ENCODE measurements at regions of chr1 and their contacts with region 1.

Region 1: DNA sequence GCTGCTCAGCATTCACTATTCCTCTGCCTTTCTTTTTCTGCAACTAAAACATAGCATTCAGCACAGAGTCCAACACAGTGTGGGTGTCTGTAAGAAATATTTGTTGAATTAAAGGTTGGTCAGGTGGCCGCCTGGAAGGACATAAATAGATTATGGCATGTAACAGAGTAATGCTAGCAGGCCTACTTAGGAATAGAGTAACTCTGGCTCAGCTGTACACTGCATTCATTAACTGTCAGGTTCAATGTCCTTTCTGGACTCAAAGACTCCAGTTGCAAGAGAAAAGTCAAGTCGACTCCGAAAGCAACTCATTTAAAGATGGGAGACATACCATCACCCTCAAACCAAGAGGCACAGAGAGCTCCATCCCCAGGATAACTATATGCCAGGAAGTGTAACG is 116.0 kb downstream of the LMX1A start:
- DNase-seq: no peak
- H3K4me3 ChIP-seq: no peak overlapping the region
- H3K27me3 ChIP-seq: peaks cover 3% of the 10 kb centered on the region
- CTCF ChIP-seq: no peak

Region 2: DNA sequence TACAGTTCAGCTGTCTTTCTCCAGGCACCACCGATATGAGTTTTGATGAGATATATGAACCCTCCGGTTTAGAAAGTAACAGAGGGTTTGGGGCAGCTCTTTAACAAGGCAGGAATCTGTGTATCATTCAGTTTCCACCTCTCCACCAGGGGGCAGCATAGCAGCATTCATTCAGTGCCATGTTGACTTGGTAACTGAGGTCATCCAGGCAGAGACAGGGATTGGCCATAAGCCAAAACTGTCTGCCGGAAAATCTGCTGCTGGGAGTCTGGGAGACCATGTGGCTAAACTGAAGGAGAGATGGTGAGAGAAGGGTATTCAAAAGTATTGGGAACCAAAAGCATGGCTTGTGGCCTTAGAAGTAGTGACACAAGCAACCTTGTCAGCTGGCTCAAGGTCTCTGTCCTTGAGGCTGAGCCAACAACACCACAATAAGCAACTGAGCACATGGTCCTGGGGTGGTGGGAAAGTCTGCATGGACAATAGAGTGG is 17.5 kb after region 1 on chr1:
- CTCF ChIA-PET with region 1: interaction called, 12 read pairs
- POLR2A ChIA-PET with region 1: no interaction called
- DNase-seq: no peak
- H3K4me3 ChIP-seq: no peak overlapping the region
- H3K27me3 ChIP-seq: no peaks in the 10 kb centered on the region
- CTCF ChIP-seq: peak; percentile 67